PC-9 (cell line): ENCODE measurements at regions of chr9 and their contacts with region 1.

Region 1: DNA sequence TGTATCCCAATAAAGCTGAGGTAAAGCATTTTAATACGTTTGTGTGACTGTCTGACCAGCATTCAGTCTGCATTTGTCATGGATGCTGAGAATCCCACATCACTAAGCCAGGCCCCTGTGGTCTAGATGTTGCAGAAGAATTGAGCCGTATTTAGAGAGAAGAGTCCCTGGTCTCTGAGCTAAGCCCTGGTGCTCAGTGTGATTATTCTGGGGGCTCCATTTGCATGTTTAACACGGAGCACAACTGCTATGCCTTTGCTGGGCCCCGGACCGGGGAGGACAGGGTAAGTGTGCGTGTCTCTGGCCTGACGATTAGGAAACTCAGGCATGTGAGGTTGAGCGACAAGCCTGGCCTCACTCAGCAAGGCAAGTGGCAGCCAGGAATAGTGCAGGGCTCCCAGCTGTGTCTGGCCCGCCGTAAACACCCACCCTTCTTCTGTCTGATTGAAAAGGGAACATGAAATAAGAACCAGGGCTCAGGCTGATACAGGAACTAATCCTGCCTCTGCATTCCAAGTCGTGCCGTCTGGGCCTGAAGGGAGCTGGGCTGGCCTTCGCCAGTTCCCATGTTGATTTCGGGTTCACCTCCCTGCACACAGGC is 22.3 kb downstream of the FAM78A start:
- DNase-seq: no peak
- H3K4me3 ChIP-seq: no peak overlapping the region
- H3K27ac ChIP-seq: no peak overlapping the region
- H3K4me1 ChIP-seq: peaks cover 9% of the 10 kb centered on the region
- H3K27me3 ChIP-seq: no peaks in the 10 kb centered on the region
- CTCF ChIP-seq: no peak

Region 2: DNA sequence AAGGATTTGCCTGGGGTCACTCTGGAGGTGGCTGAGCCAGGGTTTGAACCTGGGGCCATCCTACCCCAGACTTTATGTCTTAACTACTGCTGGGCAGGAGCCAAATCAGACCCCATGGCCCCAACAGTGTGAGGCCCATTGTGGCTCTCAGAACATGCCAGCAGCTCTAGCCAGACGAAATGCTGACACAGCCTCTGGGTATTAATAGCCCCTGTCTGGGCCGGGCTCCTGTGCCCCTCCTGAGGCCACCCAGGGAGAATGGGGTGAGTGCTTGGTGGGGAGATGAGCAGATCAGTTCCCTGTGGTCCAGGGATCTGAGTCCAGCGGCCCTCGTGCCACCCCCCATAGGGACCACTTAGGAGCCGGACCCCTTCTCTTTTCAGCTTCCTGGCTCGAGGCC is 33.4 kb after region 1 on chr9:
- CTCF ChIA-PET with region 1: interaction called, 15 read pairs
- POLR2A ChIA-PET with region 1: no interaction called
- intact Hi-C with region 1: no loop called
- DNase-seq: no peak
- H3K4me3 ChIP-seq: no peak overlapping the region
- H3K27ac ChIP-seq: no peak overlapping the region
- H3K4me1 ChIP-seq: no peaks in the 10 kb centered on the region
- H3K27me3 ChIP-seq: peaks cover 6% of the 10 kb centered on the region
- CTCF ChIP-seq: no peak

Region 3: DNA sequence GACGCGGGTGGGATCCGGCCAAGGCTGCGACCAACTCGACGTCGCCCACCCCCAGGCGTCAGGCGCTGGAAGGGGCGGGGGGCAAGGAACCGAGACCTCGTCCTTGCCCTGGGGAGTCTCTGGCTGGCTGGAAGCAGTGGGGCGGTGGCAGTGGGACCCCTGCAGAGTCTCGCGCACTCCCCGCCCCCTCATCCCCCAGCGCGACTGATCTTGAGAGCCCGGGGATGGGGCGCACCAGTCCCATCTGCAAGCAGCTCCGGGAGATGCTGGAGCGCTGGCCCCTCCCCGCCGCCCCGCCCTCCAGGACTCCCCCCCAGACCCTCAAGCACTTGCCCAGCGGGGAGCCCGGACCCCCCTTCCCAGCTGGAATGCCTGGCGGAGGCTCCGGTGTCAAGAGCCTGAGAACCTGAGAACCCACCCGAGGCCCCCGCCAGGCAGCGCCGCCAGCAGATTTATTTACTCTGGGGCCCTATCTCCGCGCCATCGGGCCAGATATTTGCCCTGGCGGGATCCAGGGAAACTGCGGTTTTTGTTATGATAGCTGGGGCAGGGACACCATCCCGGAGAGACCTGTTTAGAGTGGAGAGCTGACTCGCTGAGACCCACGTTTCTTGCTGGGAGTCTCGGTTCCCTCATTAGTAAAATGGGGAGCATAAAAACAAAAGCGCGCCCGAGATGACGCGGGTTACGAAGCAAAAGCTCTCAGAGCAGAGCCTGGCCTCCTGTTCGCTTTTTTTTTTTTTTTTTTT is 292.5 kb after region 1 on chr9:
- CTCF ChIA-PET with region 1: no interaction called
- POLR2A ChIA-PET with region 1: interaction called, 15 read pairs
- intact Hi-C with region 1: no loop called
- DNase-seq: peak; percentile 51 to 69
- H3K4me3 ChIP-seq: peak overlapping the region; percentile 40; the same call in 1 of the 2 replicates
- H3K27ac ChIP-seq: no peak overlapping the region
- H3K4me1 ChIP-seq: peaks cover 21% of the 10 kb centered on the region
- H3K27me3 ChIP-seq: peaks cover 64% of the 10 kb centered on the region
- CTCF ChIP-seq: no peak